CD8-positive, alpha-beta T cell (primary cell): ENCODE measurements at regions of chr11 and their contacts with region 1.

Region 1: GRCh38 chr11:108467091-108467823 is at the start of gene C11orf65:
- DNase-seq: peak; percentile 93 to 98 (median 95)
- ATAC-seq: peak; percentile 96
- H3K4me3 ChIP-seq: peak within 1 kb of the TSS; percentile 65 to 66
- H3K4me3 Mint-ChIP-seq: peak within 1 kb of the TSS; percentile 98
- H3K27ac ChIP-seq: peak within 1 kb of the TSS; percentile 93 to 94
- H3K27ac Mint-ChIP-seq: peak within 1 kb of the TSS; percentile 100
- H3K4me1 ChIP-seq: peaks cover 14% of the 10 kb centered on the region
- H3K4me1 Mint-ChIP-seq: peaks cover 8% of the 10 kb centered on the region
- H3K27me3 ChIP-seq: no peaks in the 10 kb centered on the region
- H3K27me3 Mint-ChIP-seq: no peaks in the 10 kb centered on the region
- CTCF ChIP-seq: no peak
- total RNA-seq, gene C11orf65: 0.31 TPM in 1 of 2 experiments, not detected in the other

Region 2: GRCh38 chr11:108121274-108122155 is 345.7 kb before region 1 on chr11 and contains the start of gene ACAT1:
- CTCF ChIA-PET with region 1: no interaction called
- POLR2A ChIA-PET with region 1: no interaction called
- intact Hi-C with region 1: loop called (anchors 1 to 10 kb)
- DNase-seq: peak; percentile 89 to 98 (median 97)
- ATAC-seq: peak; percentile 98
- H3K4me3 ChIP-seq: peak within 1 kb of the TSS; percentile 82 to 89
- H3K4me3 Mint-ChIP-seq: peak within 1 kb of the TSS; percentile 88
- H3K27ac ChIP-seq: peak within 1 kb of the TSS; percentile 59 to 70
- H3K27ac Mint-ChIP-seq: peak within 1 kb of the TSS; percentile 78
- H3K4me1 ChIP-seq: peaks cover 31% of the 10 kb centered on the region
- H3K4me1 Mint-ChIP-seq: peaks cover 43% of the 10 kb centered on the region
- H3K27me3 ChIP-seq: no peaks in the 10 kb centered on the region
- H3K27me3 Mint-ChIP-seq: no peaks in the 10 kb centered on the region
- CTCF ChIP-seq: no peak
- total RNA-seq, gene ACAT1: 14.2 to 15.0 TPM

Region 3: DNA sequence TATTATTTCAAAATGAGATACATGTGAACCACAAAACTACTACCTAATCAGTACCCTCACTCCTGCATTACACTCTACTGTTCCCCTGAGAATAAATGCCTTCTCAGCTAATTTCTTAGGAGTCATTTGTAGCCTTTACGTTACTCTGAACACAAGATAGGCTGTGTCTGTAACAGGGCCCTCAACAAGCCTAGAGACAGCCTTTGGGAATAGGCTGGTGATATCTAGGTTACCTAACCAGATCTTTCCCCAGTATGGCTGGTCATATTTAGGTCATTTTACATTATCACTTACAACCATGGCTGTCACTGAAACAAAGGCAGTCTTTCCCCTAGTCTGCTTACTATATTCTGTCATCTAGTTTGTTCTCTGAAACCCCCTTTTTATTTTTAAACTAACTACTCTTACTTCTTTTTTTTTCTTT is 230.2 kb before region 1 on chr11:
- CTCF ChIA-PET with region 1: no interaction called
- POLR2A ChIA-PET with region 1: no interaction called
- intact Hi-C with region 1: loop called in 1 of 2 experiments (anchors 5 kb)
- DNase-seq: peak in 2 of 9 experiments; percentile 59 to 75
- ATAC-seq: peak; percentile 39
- H3K4me3 ChIP-seq: peak overlapping the region; percentile 2 to 35
- H3K4me3 Mint-ChIP-seq: peak overlapping the region; percentile 72
- H3K27ac ChIP-seq: peak overlapping the region; percentile 57 to 82
- H3K27ac Mint-ChIP-seq: peak overlapping the region; percentile 96
- H3K4me1 ChIP-seq: peaks cover 95% of the 10 kb centered on the region
- H3K4me1 Mint-ChIP-seq: peaks cover 83% of the 10 kb centered on the region
- H3K27me3 ChIP-seq: no peaks in the 10 kb centered on the region
- H3K27me3 Mint-ChIP-seq: no peaks in the 10 kb centered on the region
- CTCF ChIP-seq: no peak

Region 4: GRCh38 chr11:108497317-108498045 is 30.2 kb after region 1 on chr11:
- CTCF ChIA-PET with region 1: no interaction called
- POLR2A ChIA-PET with region 1: no interaction called
- intact Hi-C with region 1: loop called (anchors 1 kb)
- DNase-seq: peak; percentile 24 to 91 (median 65)
- ATAC-seq: peak; percentile 87
- H3K4me3 ChIP-seq: peak overlapping the region; percentile 75 to 78
- H3K4me3 Mint-ChIP-seq: peak overlapping the region; percentile 98
- H3K27ac ChIP-seq: peak overlapping the region; percentile 92 to 94
- H3K27ac Mint-ChIP-seq: peak overlapping the region; percentile 99
- H3K4me1 ChIP-seq: peaks cover 9% of the 10 kb centered on the region
- H3K4me1 Mint-ChIP-seq: peaks cover 28% of the 10 kb centered on the region
- H3K27me3 ChIP-seq: no peaks in the 10 kb centered on the region
- H3K27me3 Mint-ChIP-seq: no peaks in the 10 kb centered on the region
- CTCF ChIP-seq: no peak

Region 5: DNA sequence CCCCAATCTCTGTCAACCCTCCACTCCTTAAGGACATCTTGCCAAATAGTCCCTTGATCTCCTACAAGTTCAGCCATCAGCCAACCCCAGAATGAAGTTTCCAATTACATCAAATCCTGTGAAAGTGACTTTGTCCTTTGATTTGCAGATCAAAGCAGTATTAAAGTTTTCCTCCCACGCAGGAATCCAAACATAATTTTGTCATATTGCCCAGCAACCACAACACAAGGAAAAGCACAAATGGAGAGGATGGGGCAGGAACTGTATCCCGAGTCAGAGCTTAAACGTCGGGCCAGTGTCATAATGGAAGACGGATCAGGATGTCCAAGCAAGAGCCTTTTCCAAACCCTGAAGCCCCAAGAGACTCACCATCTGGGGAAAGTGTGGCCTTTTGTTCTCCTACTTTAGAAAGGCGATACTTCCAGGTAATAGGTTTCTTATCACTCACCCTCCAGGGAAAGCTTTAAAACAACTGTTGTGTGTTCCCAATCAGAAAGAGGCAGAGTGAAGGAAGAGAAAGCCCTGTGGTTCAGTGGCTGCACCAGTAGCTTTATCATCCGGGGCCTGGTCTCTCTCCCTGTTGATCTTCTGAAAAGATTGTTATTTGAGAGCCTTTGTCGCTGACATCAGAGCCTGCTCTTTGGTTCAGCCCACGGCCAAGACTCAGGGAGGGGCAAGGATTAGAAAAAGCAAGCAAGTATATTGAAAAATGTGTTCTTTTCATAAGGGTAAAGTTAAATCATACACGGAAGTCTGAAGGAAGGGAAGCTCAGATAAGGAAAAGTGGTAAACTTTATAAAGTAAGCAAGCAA is 84.6 kb after region 1 on chr11:
- CTCF ChIA-PET with region 1: no interaction called
- POLR2A ChIA-PET with region 1: no interaction called
- intact Hi-C with region 1: no loop called
- DNase-seq: no peak
- ATAC-seq: no peak
- H3K4me3 ChIP-seq: no peak overlapping the region
- H3K4me3 Mint-ChIP-seq: no peak overlapping the region
- H3K27ac ChIP-seq: no peak overlapping the region
- H3K27ac Mint-ChIP-seq: no peak overlapping the region
- H3K4me1 ChIP-seq: no peaks in the 10 kb centered on the region
- H3K4me1 Mint-ChIP-seq: no peaks in the 10 kb centered on the region
- H3K27me3 ChIP-seq: no peaks in the 10 kb centered on the region
- H3K27me3 Mint-ChIP-seq: no peaks in the 10 kb centered on the region
- CTCF ChIP-seq: no peak

Region 6: GRCh38 chr11:108664730-108665525 is 197.7 kb after region 1 on chr11 and contains the start of gene DDX10:
- CTCF ChIA-PET with region 1: no interaction called
- POLR2A ChIA-PET with region 1: no interaction called
- intact Hi-C with region 1: loop called (anchors 1 kb)
- DNase-seq: peak; percentile 97 to 99 (median 99)
- ATAC-seq: peak; percentile 99
- H3K4me3 ChIP-seq: peak within 1 kb of the TSS; percentile 82 to 85
- H3K4me3 Mint-ChIP-seq: peak within 1 kb of the TSS; percentile 100
- H3K27ac ChIP-seq: peak within 1 kb of the TSS; percentile 66 to 71
- H3K27ac Mint-ChIP-seq: peak within 1 kb of the TSS; percentile 98
- H3K4me1 ChIP-seq: peaks cover 30% of the 10 kb centered on the region
- H3K4me1 Mint-ChIP-seq: peaks cover 49% of the 10 kb centered on the region
- H3K27me3 ChIP-seq: no peaks in the 10 kb centered on the region
- H3K27me3 Mint-ChIP-seq: no peaks in the 10 kb centered on the region
- CTCF ChIP-seq: no peak
- total RNA-seq, gene DDX10: 15.4 to 16.5 TPM

Region 7: DNA sequence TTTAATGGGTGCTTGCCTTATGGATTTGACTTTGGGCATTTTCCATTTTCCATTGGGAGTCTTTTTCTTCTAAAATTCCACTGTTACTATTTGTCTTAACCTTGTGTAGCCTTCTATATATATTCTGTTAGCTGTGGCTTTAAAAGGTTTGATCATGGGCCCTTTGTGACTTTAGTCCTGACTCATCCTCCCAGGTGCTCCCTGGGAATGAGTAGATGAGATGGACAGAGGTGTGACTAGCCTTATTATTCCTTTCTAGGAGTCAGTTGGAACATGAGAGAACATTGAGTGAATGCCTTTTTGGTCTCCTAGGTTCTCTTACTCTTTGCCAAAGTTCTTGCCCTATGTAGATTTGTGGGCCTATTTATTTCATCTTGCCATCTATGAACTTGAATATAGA is 236.7 kb after region 1 on chr11:
- CTCF ChIA-PET with region 1: no interaction called
- POLR2A ChIA-PET with region 1: no interaction called
- intact Hi-C with region 1: no loop called
- DNase-seq: no peak
- ATAC-seq: no peak
- H3K4me3 ChIP-seq: no peak overlapping the region
- H3K4me3 Mint-ChIP-seq: no peak overlapping the region
- H3K27ac ChIP-seq: no peak overlapping the region
- H3K27ac Mint-ChIP-seq: no peak overlapping the region
- H3K4me1 ChIP-seq: no peaks in the 10 kb centered on the region
- H3K4me1 Mint-ChIP-seq: no peaks in the 10 kb centered on the region
- H3K27me3 ChIP-seq: no peaks in the 10 kb centered on the region
- H3K27me3 Mint-ChIP-seq: no peaks in the 10 kb centered on the region
- CTCF ChIP-seq: no peak